Right lobe of liver (tissue), 6 donors: ENCODE measurements at regions of chr5 and their contacts with region 1.

Region 1: GRCh38 chr5:59380350-59380951 is 513.1 kb downstream of the PDE4D start:
- DNase-seq: no peak
- ATAC-seq: peak; percentile 80 to 91 (median 88)
- H3K4me3 ChIP-seq: no peak overlapping the region
- H3K27ac ChIP-seq: no peak overlapping the region
- H3K4me1 ChIP-seq: no peaks in the 10 kb centered on the region
- H3K27me3 ChIP-seq: no peaks in the 10 kb centered on the region
- CTCF ChIP-seq: peak; percentile 52 to 59 (median 54)
- POLR2A ChIP-seq: no peak

Region 2: GRCh38 chr5:59206132-59206581 is 174.3 kb before region 1 on chr5:
- intact Hi-C with region 1: no loop called
- DNase-seq: no peak
- ATAC-seq: no peak
- H3K4me3 ChIP-seq: no peak overlapping the region
- H3K27ac ChIP-seq: no peak overlapping the region
- H3K4me1 ChIP-seq: no peaks in the 10 kb centered on the region
- H3K27me3 ChIP-seq: no peaks in the 10 kb centered on the region
- CTCF ChIP-seq: no peak
- POLR2A ChIP-seq: no peak

Region 3: DNA sequence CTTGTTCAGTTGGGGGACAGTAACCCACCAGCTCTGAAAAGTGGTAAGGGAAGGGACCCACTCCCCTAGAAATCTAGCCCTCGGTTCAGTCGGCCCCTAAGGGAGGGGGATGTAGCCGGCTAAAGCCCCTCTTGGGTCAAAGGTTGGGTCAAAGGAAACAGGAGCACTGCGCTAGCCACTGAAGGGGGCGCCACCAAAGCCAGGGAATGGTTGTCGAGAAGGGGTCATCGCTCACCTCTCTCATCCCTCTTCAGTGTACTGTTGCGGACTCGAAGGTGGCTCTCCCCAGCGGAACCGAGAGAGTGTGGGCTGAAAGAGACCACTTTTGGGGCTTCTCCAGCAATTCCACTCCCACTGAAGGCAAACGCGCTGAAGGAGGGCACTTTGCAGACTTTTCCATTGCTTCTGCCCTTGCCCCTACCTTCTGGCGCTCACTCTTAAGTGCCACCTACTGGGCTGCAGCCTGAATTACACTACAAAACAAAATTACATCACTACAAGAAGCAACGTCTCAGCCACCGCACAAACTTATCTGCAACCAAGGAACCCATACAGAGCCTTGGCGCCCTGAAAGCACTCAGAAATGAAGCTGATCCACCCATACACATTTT is 116.2 kb after region 1 on chr5:
- intact Hi-C with region 1: loop called in 1 of 2 experiments (anchors 10 kb)
- DNase-seq: no peak
- ATAC-seq: peak; percentile 57 to 74 (median 69)
- H3K4me3 ChIP-seq: no peak overlapping the region
- H3K27ac ChIP-seq: no peak overlapping the region
- H3K4me1 ChIP-seq: no peaks in the 10 kb centered on the region
- H3K27me3 ChIP-seq: no peaks in the 10 kb centered on the region
- CTCF ChIP-seq: peak; percentile 40 to 50 (median 48)
- POLR2A ChIP-seq: no peak

Region 4: DNA sequence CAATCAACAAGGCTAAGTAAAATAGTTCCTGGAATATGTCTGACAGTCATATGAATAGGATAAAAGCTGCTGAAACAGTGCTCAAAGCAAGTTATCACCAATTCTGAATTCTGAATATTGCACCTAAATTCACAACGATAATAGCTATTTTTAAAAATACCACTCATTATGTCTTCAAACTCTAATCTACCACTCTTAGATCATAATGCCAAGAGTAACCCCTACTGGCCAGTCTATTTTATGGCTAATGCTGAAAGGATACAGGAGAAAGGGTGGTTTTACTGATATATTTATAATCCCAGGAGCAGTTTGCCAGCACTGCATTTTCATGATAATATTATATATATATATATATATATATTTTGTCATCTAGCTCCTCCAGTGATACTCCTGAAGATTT is 280.3 kb after region 1 on chr5:
- intact Hi-C with region 1: loop called in 1 of 2 experiments (anchors 10 kb)
- DNase-seq: no peak
- ATAC-seq: peak in 3 of 4 donors; percentile 53 to 62 (median 55)
- H3K4me3 ChIP-seq: no peak overlapping the region
- H3K27ac ChIP-seq: no peak overlapping the region
- H3K4me1 ChIP-seq: peaks cover 0 to 35% (median 11%) of the 10 kb centered on the region in 4 donors
- H3K27me3 ChIP-seq: no peaks in the 10 kb centered on the region
- CTCF ChIP-seq: peak in 3 of 4 donors; percentile 34 to 53 (median 38)
- POLR2A ChIP-seq: no peak